Right cardiac atrium (tissue), 5 donors: ENCODE measurements at regions of chr12 and their contacts with region 1.

Region 1: DNA sequence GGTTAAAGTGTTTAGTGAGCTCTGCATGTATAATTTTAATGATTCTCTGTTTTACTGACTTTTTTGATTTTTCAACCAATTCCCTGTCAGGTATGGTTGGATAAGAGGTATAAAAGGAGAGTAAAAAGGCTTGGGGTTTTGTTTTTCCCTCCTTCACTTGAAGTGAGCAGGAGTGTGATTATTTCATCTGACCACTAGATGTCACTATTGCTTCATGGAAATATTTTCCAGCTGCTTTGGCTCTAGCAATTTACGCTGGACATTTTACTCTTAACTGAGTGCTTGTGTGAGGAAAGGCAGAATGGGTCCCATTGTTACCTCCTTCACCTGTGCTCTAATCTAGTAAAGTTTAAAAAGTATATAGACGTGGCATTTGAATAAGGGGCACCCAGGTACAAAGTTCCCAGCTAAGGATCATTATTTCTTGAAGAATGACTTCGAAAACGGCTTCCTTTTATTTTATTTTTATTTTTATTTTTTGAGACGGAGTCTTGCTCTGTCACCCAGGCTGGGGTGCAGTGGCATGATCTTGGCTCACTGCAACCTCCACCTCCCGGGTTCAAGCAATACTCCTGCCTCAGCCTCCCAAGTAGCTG is 66.5 kb downstream of the TBC1D30 start:
- DNase-seq: no peak
- ATAC-seq: peak; percentile 51 to 71
- H3K4me3 ChIP-seq: no peak overlapping the region
- H3K27ac ChIP-seq: no peak overlapping the region
- H3K4me1 ChIP-seq: no peaks in the 10 kb centered on the region
- H3K27me3 ChIP-seq: peaks cover 2% of the 10 kb centered on the region

Region 2: GRCh38 chr12:64826234-64826633 is 64.7 kb before region 1 on chr12:
- intact Hi-C with region 1: no loop called
- DNase-seq: peak; percentile 52 to 81 (median 74)
- ATAC-seq: peak; percentile 67 to 75
- H3K4me3 ChIP-seq: no peak overlapping the region
- H3K27ac ChIP-seq: no peak overlapping the region
- H3K4me1 ChIP-seq: peaks cover 2% of the 10 kb centered on the region
- H3K27me3 ChIP-seq: no peaks in the 10 kb centered on the region

Region 3: DNA sequence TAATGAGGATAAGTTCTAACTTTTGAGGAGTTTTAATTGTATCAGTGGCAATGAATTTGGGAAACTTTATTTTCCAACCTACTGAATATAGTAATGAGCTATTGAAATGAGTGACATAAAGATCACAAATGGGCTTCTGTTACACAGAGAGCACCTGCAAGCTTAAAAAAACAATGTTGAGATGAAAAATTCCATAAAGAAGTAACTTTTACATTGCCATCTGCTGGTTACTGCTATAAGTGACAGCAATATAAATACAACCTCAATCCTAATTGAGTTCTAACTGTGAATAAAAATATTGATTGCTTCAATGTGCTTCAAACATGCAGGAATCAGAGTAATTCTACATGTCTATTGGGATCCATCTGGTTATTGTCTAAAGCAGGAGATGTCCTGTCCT is 216.0 kb after region 1 on chr12:
- intact Hi-C with region 1: loop called in 2 of 4 experiments (anchors 5 to 10 kb)
- DNase-seq: no peak
- ATAC-seq: no peak
- H3K4me3 ChIP-seq: no peak overlapping the region
- H3K27ac ChIP-seq: no peak overlapping the region
- H3K4me1 ChIP-seq: no peaks in the 10 kb centered on the region
- H3K27me3 ChIP-seq: no peaks in the 10 kb centered on the region

Region 4: DNA sequence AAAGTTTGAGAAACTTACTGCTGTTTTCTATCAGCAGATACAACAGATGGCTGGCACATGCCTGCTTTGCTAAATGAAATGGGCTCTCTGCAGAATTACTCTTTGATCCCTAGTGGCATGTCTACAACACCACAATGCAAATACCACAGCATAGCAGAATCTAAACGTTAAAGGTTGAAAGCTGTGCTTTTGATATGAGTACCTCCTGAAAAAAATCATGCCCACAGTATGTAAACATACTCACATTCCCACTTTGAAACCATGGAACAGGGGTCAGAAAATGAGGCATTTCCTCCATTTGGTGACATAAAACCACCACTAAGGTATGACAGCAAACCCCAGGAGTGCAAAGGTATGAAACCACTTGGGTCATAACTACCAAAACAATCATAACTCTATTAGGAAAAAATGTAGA is 222.7 kb after region 1 on chr12:
- intact Hi-C with region 1: loop called in 2 of 4 experiments (anchors 5 to 10 kb)
- DNase-seq: no peak
- ATAC-seq: no peak
- H3K4me3 ChIP-seq: no peak overlapping the region
- H3K27ac ChIP-seq: no peak overlapping the region
- H3K4me1 ChIP-seq: no peaks in the 10 kb centered on the region
- H3K27me3 ChIP-seq: no peaks in the 10 kb centered on the region

Region 5: GRCh38 chr12:65121049-65121955 is 230.3 kb after region 1 on chr12 and contains the start of gene WIF1:
- intact Hi-C with region 1: loop called (anchors 5 to 10 kb)
- DNase-seq: peak; percentile 37 to 65 (median 61)
- ATAC-seq: peak; percentile 54 to 67
- H3K4me3 ChIP-seq: peak within 1 kb of the TSS; percentile 20
- H3K27ac ChIP-seq: no peak within 1 kb of the TSS
- H3K4me1 ChIP-seq: no peaks in the 10 kb centered on the region
- H3K27me3 ChIP-seq: peaks cover 5% of the 10 kb centered on the region
- total RNA-seq, gene WIF1: 0.29 to 0.67 TPM in 2 of 4 donors, not detected in the others

Region 6: DNA sequence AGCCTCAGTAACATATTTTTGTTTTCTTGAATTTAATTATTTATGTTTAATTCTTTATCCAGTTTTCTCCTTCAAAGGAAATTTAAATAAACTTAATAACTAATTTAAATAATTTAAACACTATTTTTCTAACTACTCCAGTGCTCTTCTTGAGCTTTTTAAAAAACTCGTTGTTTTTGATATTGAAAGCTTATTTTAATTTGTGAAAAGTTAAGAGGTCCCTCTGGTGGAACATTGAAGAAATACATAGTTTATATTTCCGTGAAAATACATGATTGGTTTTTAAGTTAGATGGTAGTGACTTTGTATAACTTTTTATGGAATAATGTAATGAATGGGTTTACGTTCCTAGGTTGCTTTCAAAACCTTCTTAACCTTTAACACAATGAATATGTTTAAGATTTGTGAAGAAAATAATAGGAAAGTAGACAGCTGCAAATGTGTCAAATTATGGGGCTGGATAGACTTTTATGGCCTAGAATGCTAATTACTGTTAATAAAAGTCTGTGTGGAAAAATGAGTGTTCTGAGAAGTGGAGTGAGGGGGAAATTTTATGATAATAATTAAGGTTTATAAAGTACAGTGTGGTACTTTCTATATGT is 341.6 kb after region 1 on chr12:
- intact Hi-C with region 1: loop called in 3 of 4 experiments (anchors 5 to 10 kb)
- DNase-seq: no peak
- ATAC-seq: no peak
- H3K4me3 ChIP-seq: no peak overlapping the region
- H3K27ac ChIP-seq: no peak overlapping the region
- H3K4me1 ChIP-seq: no peaks in the 10 kb centered on the region
- H3K27me3 ChIP-seq: no peaks in the 10 kb centered on the region

Region 7: GRCh38 chr12:66107451-66107915 is 1216.5 kb after region 1 on chr12:
- intact Hi-C with region 1: loop called in 1 of 4 experiments (anchors 10 kb)
- DNase-seq: peak in 2 of 3 donors; percentile 31 to 52
- ATAC-seq: peak; percentile 83 to 87
- H3K4me3 ChIP-seq: no peak overlapping the region
- H3K27ac ChIP-seq: no peak overlapping the region
- H3K4me1 ChIP-seq: no peaks in the 10 kb centered on the region
- H3K27me3 ChIP-seq: no peaks in the 10 kb centered on the region